Heart left ventricle (tissue), 16 donors: ENCODE measurements at regions of chr1 and their contacts with region 1.

Region 1: DNA sequence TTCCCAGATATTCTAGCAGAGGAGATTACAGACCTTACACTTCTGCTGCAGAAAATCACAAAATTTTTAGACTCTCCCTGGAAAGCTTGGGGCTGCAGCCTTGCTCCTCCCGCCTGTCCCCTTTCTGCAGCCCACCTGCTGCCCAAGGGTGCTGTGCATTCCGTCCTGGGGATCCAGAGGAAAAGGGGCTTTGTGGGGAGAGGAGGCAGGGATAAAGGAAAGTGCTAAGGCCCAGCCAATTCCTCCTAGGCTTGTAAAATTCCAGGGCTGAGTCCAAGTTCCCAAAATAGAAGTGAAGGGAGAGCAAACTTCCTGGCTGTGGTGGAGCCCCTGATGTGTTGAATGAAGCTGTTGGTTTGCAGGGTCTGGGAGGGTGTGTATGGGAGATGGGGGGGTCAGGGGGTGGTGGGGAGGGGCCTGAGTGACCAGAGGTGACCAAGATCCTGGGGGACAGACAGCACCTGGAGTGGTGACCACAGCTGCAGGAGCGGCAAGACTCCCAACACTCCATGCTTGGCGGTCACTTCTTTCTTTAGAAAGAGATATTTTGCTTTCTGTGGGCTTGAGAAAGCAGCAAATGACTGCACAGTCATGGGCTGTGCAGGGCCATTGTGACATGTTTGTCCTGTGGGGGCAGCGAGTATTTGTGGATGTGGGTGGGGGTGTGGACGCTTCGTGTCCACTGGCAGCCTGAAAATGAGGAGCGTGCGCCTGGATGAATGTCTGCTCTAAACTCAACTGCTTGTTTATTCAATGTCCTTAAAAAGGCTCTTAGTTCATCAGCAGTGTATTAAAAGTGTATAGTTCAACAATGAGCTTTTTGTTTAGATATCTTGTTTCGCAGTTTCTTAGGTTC is 68.4 kb downstream of the TLR5 start:
- DNase-seq: peak in 1 of 5 donors; percentile 37
- ATAC-seq: peak; percentile 30 to 65 (median 60)
- H3K4me3 ChIP-seq: peak overlapping the region in 5 of 12 donors; percentile 9 to 23 (median 12)
- H3K27ac ChIP-seq: peak overlapping the region in 10 of 12 donors; percentile 30 to 78 (median 55)
- H3K4me1 ChIP-seq: peaks cover 4 to 58% (median 38%) of the 10 kb centered on the region in 12 donors
- H3K27me3 ChIP-seq: no peaks in the 10 kb centered on the region
- CTCF ChIP-seq: no peak
- POLR2A ChIP-seq: no peak

Region 2: GRCh38 chr1:222814536-222815439 is 259.9 kb before region 1 on chr1 and contains the start of gene DISP1:
- intact Hi-C with region 1: loop called in 3 of 10 experiments (anchors 2 to 10 kb)
- DNase-seq: peak; percentile 83 to 91 (median 88)
- ATAC-seq: peak; percentile 85 to 98 (median 98)
- H3K4me3 ChIP-seq: peak within 1 kb of the TSS; percentile 64 to 93 (median 87)
- H3K27ac ChIP-seq: peak within 1 kb of the TSS; percentile 49 to 97 (median 87)
- H3K4me1 ChIP-seq: peaks cover 0 to 37% (median 14%) of the 10 kb centered on the region in 12 donors
- H3K27me3 ChIP-seq: peaks cover 0 to 3% (median 0%) of the 10 kb centered on the region in 9 donors
- CTCF ChIP-seq: no peak
- POLR2A ChIP-seq: peak in 1 of 2 donors; percentile 59
- total RNA-seq, gene DISP1: 3.5 to 16.3 (median 5.9) TPM

Region 3: GRCh38 chr1:222928212-222928611 is 146.5 kb before region 1 on chr1:
- intact Hi-C with region 1: loop called in 4 of 10 experiments (anchors 5 to 10 kb)
- DNase-seq: peak; percentile 68 to 78 (median 69)
- ATAC-seq: peak; percentile 93 to 99 (median 98)
- H3K4me3 ChIP-seq: peak overlapping the region; percentile 1 to 63 (median 45)
- H3K27ac ChIP-seq: peak overlapping the region in 11 of 12 donors; percentile 5 to 62 (median 27)
- H3K4me1 ChIP-seq: peaks cover 0 to 48% (median 29%) of the 10 kb centered on the region in 12 donors
- H3K27me3 ChIP-seq: no peaks in the 10 kb centered on the region
- CTCF ChIP-seq: peak in 4 of 12 donors; percentile 22 to 41 (median 30)
- POLR2A ChIP-seq: peak in 1 of 2 donors; percentile 58

Region 4: DNA sequence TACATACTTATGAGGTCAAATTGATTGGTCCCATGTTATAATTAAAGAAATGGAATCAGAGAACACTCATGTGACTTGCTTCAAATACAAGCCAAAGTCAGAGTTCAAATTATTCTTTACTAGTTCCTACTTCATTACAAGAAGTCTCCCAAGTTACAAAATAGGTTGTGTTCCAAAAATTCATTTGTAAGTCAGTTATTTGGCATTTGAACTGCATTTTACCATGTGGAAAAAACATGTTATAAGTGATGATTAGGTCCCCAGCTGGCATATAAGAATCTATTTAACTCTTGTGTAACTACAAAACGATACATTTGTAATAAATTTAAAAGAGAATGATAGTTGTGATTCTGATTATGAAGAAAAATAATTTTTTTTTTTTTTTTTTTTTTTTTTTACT is 135.7 kb before region 1 on chr1:
- intact Hi-C with region 1: loop called in 3 of 10 experiments (anchors 5 to 10 kb)
- DNase-seq: no peak
- ATAC-seq: no peak
- H3K4me3 ChIP-seq: no peak overlapping the region
- H3K27ac ChIP-seq: no peak overlapping the region
- H3K4me1 ChIP-seq: peaks cover 0 to 8% (median 1%) of the 10 kb centered on the region in 12 donors
- H3K27me3 ChIP-seq: no peaks in the 10 kb centered on the region
- CTCF ChIP-seq: no peak
- POLR2A ChIP-seq: no peak

Region 5: GRCh38 chr1:222994506-222995235 is 80.0 kb before region 1 on chr1:
- intact Hi-C with region 1: loop called in 1 of 10 experiments (anchors 5 kb)
- DNase-seq: no peak
- ATAC-seq: peak in 2 of 4 donors; percentile 10 to 16
- H3K4me3 ChIP-seq: no peak overlapping the region
- H3K27ac ChIP-seq: peak overlapping the region in 9 of 12 donors; percentile 19 to 64 (median 39)
- H3K4me1 ChIP-seq: peaks cover 5 to 35% (median 24%) of the 10 kb centered on the region in 12 donors
- H3K27me3 ChIP-seq: no peaks in the 10 kb centered on the region
- CTCF ChIP-seq: no peak
- POLR2A ChIP-seq: no peak

Region 6: GRCh38 chr1:223016890-223017289 is 57.8 kb before region 1 on chr1:
- intact Hi-C with region 1: loop called in 3 of 10 experiments (anchors 2 to 5 kb)
- DNase-seq: no peak
- ATAC-seq: peak in 2 of 4 donors; percentile 8 to 27
- H3K4me3 ChIP-seq: no peak overlapping the region
- H3K27ac ChIP-seq: peak overlapping the region; percentile 8 to 79 (median 67)
- H3K4me1 ChIP-seq: peaks cover 0 to 26% (median 8%) of the 10 kb centered on the region in 12 donors
- H3K27me3 ChIP-seq: no peaks in the 10 kb centered on the region
- CTCF ChIP-seq: no peak
- POLR2A ChIP-seq: no peak

Region 7: GRCh38 chr1:223022641-223023473 is 51.8 kb before region 1 on chr1:
- intact Hi-C with region 1: loop called in 2 of 10 experiments (anchors 5 kb)
- DNase-seq: peak in 4 of 5 donors; percentile 38 to 52 (median 46)
- ATAC-seq: peak; percentile 73 to 97 (median 80)
- H3K4me3 ChIP-seq: no peak overlapping the region
- H3K27ac ChIP-seq: peak overlapping the region; percentile 15 to 81 (median 66)
- H3K4me1 ChIP-seq: peaks cover 0 to 35% (median 16%) of the 10 kb centered on the region in 12 donors
- H3K27me3 ChIP-seq: no peaks in the 10 kb centered on the region
- CTCF ChIP-seq: no peak
- POLR2A ChIP-seq: no peak